PC-3 (cell line): ENCODE measurements at regions of chr4 and their contacts with region 1.

Region 1: GRCh38 chr4:113958766-113959538 is 20.5 kb downstream of the ARSJ start:
- DNase-seq: peak; percentile 96
- ATAC-seq: peak; percentile 85
- H3K4me3 ChIP-seq: peak overlapping the region; percentile 55
- H3K27ac ChIP-seq: peak overlapping the region; percentile 93
- H3K4me1 ChIP-seq: peaks cover 67% of the 10 kb centered on the region
- H3K27me3 ChIP-seq: no peaks in the 10 kb centered on the region
- CTCF ChIP-seq: no peak

Region 2: GRCh38 chr4:113781439-113782040 is 177.4 kb before region 1 on chr4:
- CTCF ChIA-PET with region 1: no interaction called
- POLR2A ChIA-PET with region 1: no interaction called
- intact Hi-C with region 1: loop called (anchors 5 kb)
- DNase-seq: peak; percentile 63
- ATAC-seq: no peak
- H3K4me3 ChIP-seq: no peak overlapping the region
- H3K27ac ChIP-seq: no peak overlapping the region
- H3K4me1 ChIP-seq: peaks cover 18% of the 10 kb centered on the region
- H3K27me3 ChIP-seq: no peaks in the 10 kb centered on the region
- CTCF ChIP-seq: peak; percentile 72

Region 3: DNA sequence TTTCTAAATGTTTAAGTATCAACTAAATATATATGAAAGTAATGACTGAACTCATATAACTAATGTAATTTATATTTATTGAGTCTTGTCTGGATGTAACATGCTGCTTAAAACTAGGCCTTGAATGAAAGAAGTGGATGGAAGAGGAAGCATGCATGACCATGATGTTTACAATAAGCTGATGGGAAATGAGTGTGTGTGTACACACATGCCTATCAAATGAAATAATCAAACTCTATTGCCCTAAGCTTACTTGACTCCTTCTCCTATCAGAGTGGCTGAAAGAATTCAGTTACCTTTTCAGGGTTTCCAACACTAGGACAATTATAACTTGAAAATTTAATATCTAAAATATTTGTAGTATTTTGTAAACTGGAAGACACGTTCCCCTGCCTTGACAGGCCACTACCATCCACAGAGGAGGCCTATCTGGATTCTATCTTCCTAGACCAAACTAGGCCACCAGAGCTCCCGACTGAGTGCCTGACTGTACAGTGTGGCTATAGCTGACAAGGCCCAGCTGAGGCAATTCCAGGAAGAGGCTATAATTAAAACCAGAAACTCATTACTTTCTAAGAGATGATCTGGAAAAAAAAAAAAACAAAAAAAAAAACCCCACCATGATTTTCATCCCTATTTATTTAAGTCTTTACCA is 12.9 kb after region 1 on chr4:
- CTCF ChIA-PET with region 1: no interaction called
- POLR2A ChIA-PET with region 1: no interaction called
- intact Hi-C with region 1: loop called (anchors 1 kb)
- DNase-seq: peak; percentile 69
- ATAC-seq: peak; percentile 91
- H3K4me3 ChIP-seq: no peak overlapping the region
- H3K27ac ChIP-seq: peak overlapping the region; percentile 63
- H3K4me1 ChIP-seq: peaks cover 41% of the 10 kb centered on the region
- H3K27me3 ChIP-seq: no peaks in the 10 kb centered on the region
- CTCF ChIP-seq: no peak

Region 4: DNA sequence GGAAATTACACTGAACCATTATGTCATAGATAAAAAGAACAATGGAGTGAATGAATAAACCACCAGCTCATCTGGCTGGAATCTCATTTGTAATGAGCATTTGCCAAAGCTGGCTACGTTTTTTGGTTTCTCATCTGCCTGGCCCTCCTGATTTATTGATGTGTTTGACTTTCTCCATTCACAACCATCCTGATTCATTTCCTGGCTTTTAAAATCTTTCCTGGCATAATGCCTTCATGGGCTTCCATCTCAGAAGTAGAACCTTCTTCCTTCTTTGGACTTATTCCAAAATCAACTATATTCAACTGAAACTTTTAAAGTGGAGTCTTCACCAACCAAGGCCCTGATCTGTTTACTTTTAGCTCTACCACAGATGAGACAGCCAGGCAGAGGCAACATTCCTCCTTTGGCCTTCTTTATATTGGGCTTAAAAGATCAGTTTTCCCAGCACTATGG is 56.5 kb after region 1 on chr4:
- CTCF ChIA-PET with region 1: no interaction called
- POLR2A ChIA-PET with region 1: no interaction called
- intact Hi-C with region 1: loop called (anchors 2 kb)
- DNase-seq: peak; percentile 97
- ATAC-seq: peak; percentile 89
- H3K4me3 ChIP-seq: no peak overlapping the region
- H3K27ac ChIP-seq: peak overlapping the region; percentile 92
- H3K4me1 ChIP-seq: peaks cover 46% of the 10 kb centered on the region
- H3K27me3 ChIP-seq: no peaks in the 10 kb centered on the region
- CTCF ChIP-seq: no peak

Region 5: DNA sequence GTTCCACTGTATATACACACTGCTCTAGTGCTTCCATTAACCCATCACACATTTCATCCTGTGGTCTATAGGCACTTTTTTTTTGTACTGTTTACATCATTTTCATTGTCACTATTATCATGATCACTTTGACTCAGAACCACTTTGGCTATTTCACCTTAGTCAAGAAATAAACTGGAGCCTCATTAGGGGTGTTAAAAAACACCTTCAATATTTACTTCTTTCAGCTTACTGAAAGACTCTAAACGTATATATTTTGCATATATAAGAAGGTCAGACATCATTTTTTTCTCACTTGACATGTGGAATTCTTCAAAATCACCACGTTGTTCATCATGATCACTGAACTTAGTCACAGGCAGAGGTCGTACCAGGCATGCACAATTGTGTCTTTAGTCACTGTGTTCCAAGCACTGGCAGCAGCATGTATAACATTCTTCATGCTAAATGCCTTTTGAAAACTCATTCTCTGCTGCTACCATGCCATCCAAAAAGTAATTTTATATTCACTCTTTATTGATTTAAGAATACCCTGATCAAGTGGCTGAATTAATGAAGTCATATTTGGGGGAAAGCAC is 249.7 kb after region 1 on chr4:
- CTCF ChIA-PET with region 1: no interaction called
- POLR2A ChIA-PET with region 1: no interaction called
- intact Hi-C with region 1: no loop called
- DNase-seq: peak; percentile 12
- ATAC-seq: no peak
- H3K4me3 ChIP-seq: no peak overlapping the region
- H3K27ac ChIP-seq: no peak overlapping the region
- H3K4me1 ChIP-seq: no peaks in the 10 kb centered on the region
- H3K27me3 ChIP-seq: no peaks in the 10 kb centered on the region
- CTCF ChIP-seq: peak; percentile 27; the same call in 1 of the 2 replicates

Region 6: GRCh38 chr4:114318309-114318708 is 359.4 kb after region 1 on chr4:
- CTCF ChIA-PET with region 1: no interaction called
- POLR2A ChIA-PET with region 1: no interaction called
- intact Hi-C with region 1: loop called (anchors 5 kb)
- DNase-seq: peak; percentile 45
- ATAC-seq: peak; percentile 62
- H3K4me3 ChIP-seq: no peak overlapping the region
- H3K27ac ChIP-seq: no peak overlapping the region
- H3K4me1 ChIP-seq: 0 out of 2 replicates have a peak, but pooled peaks cover 6% of the 10 kb centered on the region
- H3K27me3 ChIP-seq: no peaks in the 10 kb centered on the region
- CTCF ChIP-seq: no peak